ENCODE measurements at regions of chr11 and their contacts with region 1.

Region 1: GRCh38 chr11:87043894-87044293 is 6.2 kb downstream of the TMEM135 start:
- DNase-seq: no peak
- ATAC-seq: no peak
- H3K4me3 ChIP-seq: no peak overlapping the region
- H3K27ac ChIP-seq: no peak overlapping the region
- H3K4me1 ChIP-seq: peaks cover 0 to 37% (median 17%) of the 10 kb centered on the region in 12 donors
- H3K27me3 ChIP-seq: no peaks in the 10 kb centered on the region
- CTCF ChIP-seq: no peak
- POLR2A ChIP-seq: no peak

Region 2: GRCh38 chr11:87150936-87151335 is 107.0 kb after region 1 on chr11:
- intact Hi-C with region 1: loop called in 1 of 10 experiments (anchors 10 kb)
- DNase-seq: no peak
- ATAC-seq: no peak
- H3K4me3 ChIP-seq: no peak overlapping the region
- H3K27ac ChIP-seq: peak overlapping the region in 3 of 12 donors; percentile 19 to 50 (median 30)
- H3K4me1 ChIP-seq: peaks cover 0 to 18% (median 0%) of the 10 kb centered on the region in 12 donors
- H3K27me3 ChIP-seq: no peaks in the 10 kb centered on the region
- CTCF ChIP-seq: no peak
- POLR2A ChIP-seq: no peak